Psoas muscle (tissue), 8 donors: ENCODE measurements at regions of chr16 and their contacts with region 1.

Region 1: GRCh38 chr16:56317998-56318826 is 107.1 kb downstream of the AMFR start:
- DNase-seq: peak; percentile 83 to 90
- ATAC-seq: peak; percentile 96 to 99 (median 99)
- H3K4me3 ChIP-seq: peak overlapping the region; percentile 52
- H3K27ac ChIP-seq: no peak overlapping the region
- H3K4me1 ChIP-seq: peaks cover 4% of the 10 kb centered on the region
- H3K27me3 ChIP-seq: peaks cover 0 to 5% (median 0%) of the 10 kb centered on the region in 3 donors
- CTCF ChIP-seq: peak; percentile 92

Region 2: GRCh38 chr16:55711959-55712876 is 606.0 kb before region 1 on chr16:
- intact Hi-C with region 1: loop called in 1 of 2 experiments (anchors 10 kb)
- DNase-seq: peak; percentile 51 to 77
- ATAC-seq: peak; percentile 61 to 74 (median 66)
- H3K4me3 ChIP-seq: no peak overlapping the region
- H3K27ac ChIP-seq: no peak overlapping the region
- H3K4me1 ChIP-seq: no peaks in the 10 kb centered on the region
- H3K27me3 ChIP-seq: peaks cover 0 to 8% (median 4%) of the 10 kb centered on the region in 3 donors
- CTCF ChIP-seq: peak; percentile 73

Region 3: GRCh38 chr16:55944377-55944802 is 373.8 kb before region 1 on chr16:
- intact Hi-C with region 1: loop called (anchors 2 kb)
- DNase-seq: peak; percentile 67 to 76
- ATAC-seq: peak; percentile 68 to 86 (median 78)
- H3K4me3 ChIP-seq: no peak overlapping the region
- H3K27ac ChIP-seq: no peak overlapping the region
- H3K4me1 ChIP-seq: no peaks in the 10 kb centered on the region
- H3K27me3 ChIP-seq: peaks cover 0 to 4% (median 2%) of the 10 kb centered on the region in 3 donors
- CTCF ChIP-seq: peak; percentile 81

Region 4: DNA sequence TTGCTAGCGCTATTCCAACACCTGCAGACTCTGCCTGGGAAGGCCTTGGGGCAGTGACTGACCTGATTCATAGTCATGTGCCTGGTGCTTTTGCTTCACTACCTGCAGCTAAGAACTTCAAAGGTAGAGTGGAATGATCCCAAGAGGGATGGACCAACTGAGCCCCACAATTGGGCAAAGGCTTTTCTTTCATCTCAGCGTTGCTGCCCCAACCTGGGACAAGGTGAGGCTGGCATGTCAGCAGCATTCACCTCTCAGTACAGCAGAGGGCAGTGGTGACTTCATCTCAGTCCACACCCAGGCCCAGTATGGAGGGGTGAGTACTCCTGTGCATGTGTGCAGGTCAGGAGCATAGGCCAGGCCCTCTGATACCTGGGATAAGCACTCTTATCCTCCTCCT is 276.5 kb before region 1 on chr16:
- intact Hi-C with region 1: loop called in 1 of 2 experiments (anchors 5 kb)
- DNase-seq: no peak
- ATAC-seq: no peak
- H3K4me3 ChIP-seq: no peak overlapping the region
- H3K27ac ChIP-seq: no peak overlapping the region
- H3K4me1 ChIP-seq: no peaks in the 10 kb centered on the region
- H3K27me3 ChIP-seq: peaks cover 0 to 2% (median 0%) of the 10 kb centered on the region in 3 donors
- CTCF ChIP-seq: no peak